ENCODE measurements at regions of chr9 and their contacts with region 1.

Region 1: DNA sequence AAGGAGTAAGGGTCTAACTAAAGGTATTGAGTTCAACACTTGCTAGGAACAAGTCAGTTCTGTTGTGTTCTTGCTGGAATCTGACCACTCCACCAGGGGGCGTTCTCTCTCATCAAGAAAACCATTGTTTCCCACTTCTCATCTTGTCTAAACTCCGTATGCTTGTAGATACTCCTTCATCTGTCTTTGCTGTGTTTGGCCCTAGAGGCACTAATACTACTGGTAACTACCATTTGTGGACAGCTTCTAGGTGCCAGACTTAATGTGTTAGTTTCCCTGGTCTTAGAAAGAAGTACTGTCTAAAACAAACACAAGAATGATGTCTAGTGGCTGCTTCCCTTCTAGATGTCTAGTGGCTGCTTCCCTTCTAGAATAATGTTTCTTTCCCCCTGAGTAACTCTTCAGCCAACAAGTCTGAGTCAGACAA is 18.7 kb upstream of the PTPDC1 start:
- DNase-seq: peak; percentile 82
- H3K4me3 ChIP-seq: no peak overlapping the region
- H3K27ac ChIP-seq: no peak overlapping the region
- H3K27me3 ChIP-seq: no peaks in the 10 kb centered on the region
- CTCF ChIP-seq: peak; percentile 85

Region 2: DNA sequence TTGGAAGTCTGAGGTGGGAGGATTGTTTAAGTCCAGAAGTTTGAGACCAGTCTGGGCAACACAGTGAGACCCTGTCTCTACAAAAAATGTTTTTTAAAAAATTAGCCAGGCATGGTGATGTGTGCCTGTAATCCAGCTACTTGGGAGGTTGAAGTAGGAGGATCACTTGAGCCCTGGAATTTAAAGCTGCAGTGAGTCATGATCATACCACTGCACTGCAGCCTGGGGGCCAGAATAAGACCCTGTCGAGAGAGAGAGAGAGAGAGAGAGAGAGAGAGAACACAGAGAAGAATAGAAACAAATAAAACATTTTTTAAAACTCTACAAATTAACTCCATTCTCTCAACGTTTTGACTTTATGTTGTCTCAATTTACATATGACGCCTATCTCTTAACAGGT is 222.2 kb before region 1 on chr9:
- CTCF ChIA-PET with region 1: no interaction called
- POLR2A ChIA-PET with region 1: no interaction called
- DNase-seq: no peak
- H3K4me3 ChIP-seq: no peak overlapping the region
- H3K27ac ChIP-seq: no peak overlapping the region
- H3K27me3 ChIP-seq: no peaks in the 10 kb centered on the region
- CTCF ChIP-seq: no peak

Region 3: DNA sequence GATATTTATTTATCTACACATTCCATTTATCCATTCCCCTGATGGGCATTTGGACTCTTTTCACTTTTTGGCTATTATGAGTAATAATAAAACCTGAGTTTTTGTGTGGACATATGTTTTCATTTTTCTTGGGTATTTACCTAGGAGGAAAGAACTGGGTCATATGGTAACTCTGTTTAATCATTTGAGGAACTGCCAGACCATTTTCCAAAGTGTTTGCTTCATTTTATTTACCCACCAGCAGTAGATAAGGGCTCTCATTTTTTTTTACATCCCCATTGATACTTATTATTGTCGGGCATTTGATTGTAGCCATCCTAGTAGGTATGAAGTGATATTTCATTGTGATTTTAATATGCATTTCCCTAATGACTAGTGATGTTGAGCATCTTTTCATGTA is 11.0 kb after region 1 on chr9:
- CTCF ChIA-PET with region 1: interaction called, 15 read pairs
- POLR2A ChIA-PET with region 1: no interaction called
- DNase-seq: no peak
- H3K4me3 ChIP-seq: no peak overlapping the region
- H3K27ac ChIP-seq: no peak overlapping the region
- H3K27me3 ChIP-seq: no peaks in the 10 kb centered on the region
- CTCF ChIP-seq: no peak

Region 4: DNA sequence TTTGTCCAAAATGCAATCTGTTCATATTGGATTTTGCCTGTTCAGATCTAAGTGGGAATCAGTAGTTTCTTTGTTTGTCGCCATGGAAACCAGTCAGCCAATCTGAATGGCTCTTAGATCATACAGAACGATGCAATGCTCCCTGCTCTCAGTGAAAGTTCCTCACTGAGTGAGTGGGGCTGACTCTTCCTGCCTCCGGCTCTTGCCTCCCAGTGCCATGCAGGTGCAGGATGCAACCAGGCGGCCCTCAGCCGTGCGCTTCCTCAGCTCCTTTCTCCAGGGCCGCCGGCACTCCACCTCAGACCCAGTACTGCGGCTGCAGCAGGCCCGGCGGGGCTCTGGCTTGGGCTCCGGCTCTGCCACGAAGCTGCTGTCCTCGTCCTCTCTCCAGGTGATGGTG is 18.8 kb after region 1 on chr9 and contains the start of gene PTPDC1:
- CTCF ChIA-PET with region 1: interaction called, 28 read pairs
- POLR2A ChIA-PET with region 1: no interaction called
- DNase-seq: peak; percentile 62
- H3K4me3 ChIP-seq: no peak within 1 kb of the TSS; the same call in 1 of the 2 replicates
- H3K27ac ChIP-seq: no peak within 1 kb of the TSS
- H3K27me3 ChIP-seq: no peaks in the 10 kb centered on the region
- CTCF ChIP-seq: no peak
- polyA plus RNA-seq, gene PTPDC1: 6.0 and 6.6 TPM in 2 replicates

Region 5: GRCh38 chr9:94250456-94250855 is 184.9 kb after region 1 on chr9:
- CTCF ChIA-PET with region 1: no interaction called
- POLR2A ChIA-PET with region 1: no interaction called
- DNase-seq: no peak
- H3K4me3 ChIP-seq: no peak overlapping the region
- H3K27ac ChIP-seq: no peak overlapping the region
- H3K27me3 ChIP-seq: peaks cover 3% of the 10 kb centered on the region
- CTCF ChIP-seq: no peak